ENCODE measurements at regions of chr7 and their contacts with region 1.

Region 1: GRCh38 chr7:147321504-147321903 is 1204.9 kb downstream of the CNTNAP2 start:
- DNase-seq: no peak

Region 2: GRCh38 chr7:147432079-147432478 is 110.6 kb after region 1 on chr7:
- intact Hi-C with region 1: loop called in 1 of 2 experiments (anchors 5 kb)
- DNase-seq: no peak

Measured in posterior vena cava (tissue), 2 donors.